Head of caudate nucleus (tissue), 42 donors: ENCODE measurements at regions of chr19 and their contacts with region 1.

Region 1: GRCh38 chr19:3970808-3971598 is at the start of gene DAPK3:
- DNase-seq: peak; percentile 96 to 99 (median 98)

Region 2: DNA sequence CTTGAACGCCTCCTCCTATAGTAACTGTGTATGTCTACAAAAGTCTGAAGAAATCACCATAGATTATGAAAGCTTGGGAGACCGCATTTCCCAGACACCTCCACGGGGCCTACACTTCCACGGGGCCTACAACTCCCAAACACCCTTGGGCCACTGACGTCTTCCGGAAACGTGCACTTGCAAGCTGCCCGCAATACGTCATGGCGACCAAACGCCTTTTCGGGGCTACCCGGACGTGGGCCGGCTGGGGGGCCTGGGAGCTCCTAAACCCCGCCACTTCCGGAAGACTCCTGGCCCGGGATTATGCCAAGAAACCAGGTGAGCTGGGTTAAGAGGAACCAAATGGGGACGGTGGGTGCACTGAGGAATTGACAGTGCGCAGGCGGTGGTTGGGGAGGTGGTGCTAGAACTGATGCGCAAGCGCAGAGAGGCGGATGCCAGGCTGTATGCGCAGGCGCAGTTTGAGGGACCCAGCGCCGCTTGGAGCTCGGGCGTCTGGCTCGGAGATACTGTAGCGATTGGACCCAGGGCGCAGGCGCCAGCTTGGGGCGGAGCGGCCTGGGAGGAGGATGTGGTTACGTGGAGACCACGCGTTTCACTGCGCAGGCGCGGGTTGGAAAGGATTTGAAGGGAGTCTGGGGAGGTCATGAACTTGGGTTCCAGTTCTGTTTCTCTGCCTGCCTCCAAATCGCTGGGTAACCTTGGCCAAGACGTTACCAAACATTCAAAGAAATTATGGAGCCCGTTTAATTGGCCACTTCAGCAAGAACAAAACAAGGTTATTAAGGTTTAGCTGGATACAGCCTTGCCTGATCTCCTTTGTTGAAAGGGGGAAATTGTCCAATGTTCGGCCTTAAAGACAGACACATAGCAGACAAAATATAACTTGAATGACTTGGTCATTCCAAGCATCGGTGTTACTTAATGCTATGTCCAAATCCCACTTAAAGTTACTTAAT is 208.2 kb before region 1 on chr19 and contains the start of gene MRPL54:
- intact Hi-C with region 1: loop called (anchors 10 kb)
- DNase-seq: peak; percentile 94 to 100 (median 99)

Region 3: DNA sequence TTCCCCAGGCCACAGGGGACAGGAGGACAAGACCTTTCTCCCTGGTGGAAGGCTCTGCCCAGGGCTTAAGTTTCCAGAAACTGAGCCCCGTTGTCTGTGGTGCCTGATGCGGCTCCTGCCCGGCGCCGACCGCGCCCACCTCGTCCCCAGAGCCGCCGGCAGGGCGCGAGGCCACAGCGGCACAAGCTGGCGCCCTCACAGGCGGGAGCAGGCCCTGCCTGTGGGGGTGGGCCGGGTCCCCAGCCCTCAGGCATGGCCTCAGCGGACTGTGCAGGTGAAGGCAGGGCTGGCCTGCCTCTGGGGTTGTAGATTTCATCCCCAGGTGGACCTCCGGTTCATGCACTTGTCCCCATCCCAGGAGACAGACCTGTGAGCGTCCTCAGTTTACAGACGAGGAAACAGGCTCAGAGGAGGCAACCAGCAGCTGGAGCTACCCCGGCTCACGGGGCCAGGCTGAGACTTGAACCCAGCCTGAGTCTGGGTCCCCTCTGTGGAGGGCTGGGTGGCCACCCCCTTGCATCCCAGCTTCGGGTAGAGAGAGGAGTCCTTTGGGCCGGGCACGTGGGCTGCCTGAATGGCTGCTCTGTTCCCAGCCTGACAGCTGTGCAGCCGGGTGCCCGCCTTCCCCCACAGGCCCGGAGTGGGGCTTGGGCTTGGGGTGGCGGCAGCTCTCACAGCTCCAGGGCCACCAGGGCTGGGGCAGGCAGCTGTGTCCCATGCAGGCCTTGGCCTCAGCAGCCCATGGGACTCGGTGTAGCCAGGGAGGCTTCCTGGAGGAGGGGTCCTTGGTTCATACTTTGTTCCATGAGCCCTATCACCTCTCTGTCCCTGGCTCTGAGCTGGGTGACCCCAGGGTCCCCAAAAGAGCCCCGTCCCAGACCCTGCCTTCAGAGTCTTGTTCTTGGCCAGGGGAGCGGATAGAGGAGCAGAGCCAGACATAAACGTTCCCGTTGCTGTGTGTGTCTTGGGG is 63.3 kb after region 1 on chr19:
- intact Hi-C with region 1: no loop called
- DNase-seq: peak; percentile 77 to 96 (median 91)